GM12878 (cell line): ENCODE measurements at regions of chr15 and their contacts with region 1.

Region 1: DNA sequence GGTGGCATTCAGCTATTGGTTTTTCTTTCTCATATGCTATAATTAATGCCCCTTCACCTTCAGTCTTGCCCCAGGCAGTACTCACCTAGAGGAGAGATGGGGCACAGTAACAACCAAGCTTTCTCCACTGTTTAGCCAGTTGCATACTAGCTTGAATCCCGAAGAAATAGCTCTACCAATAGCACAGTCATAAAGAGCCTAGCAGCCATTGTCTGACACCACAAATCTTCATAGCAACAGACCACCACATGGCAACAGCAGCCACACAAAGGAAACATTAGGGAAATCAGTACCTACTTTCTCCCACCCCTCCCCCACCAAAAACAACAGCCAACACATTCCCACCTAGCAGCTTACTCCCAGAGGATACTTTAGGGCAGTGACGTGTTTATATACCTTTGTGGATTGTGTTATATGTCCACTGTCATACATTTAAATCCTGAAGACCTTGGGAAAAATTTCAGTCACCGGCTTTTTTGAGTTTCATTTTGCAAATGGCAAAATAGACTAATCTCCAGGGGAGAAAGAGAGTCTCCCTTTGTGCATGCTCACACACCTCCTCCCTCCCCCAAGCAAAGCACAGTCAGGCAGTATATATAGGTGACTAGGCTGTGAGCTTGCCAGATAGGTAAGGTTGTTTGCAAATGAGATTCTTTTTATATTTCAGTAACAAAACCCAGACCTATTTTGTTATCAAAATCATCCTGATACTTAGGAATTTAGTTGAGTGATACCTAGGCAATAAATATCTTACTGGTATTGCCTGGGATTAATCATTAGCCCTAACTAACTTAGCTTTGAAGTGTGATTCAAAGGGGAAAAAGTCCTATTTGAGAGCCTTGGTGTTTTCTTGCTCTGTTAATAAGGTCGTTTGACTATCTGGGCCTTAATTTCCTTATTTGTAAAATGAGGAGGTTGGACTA is 140.6 kb downstream of the RBPMS2 start:
- DNase-seq: peak; percentile 91
- ATAC-seq: peak; percentile 81
- H3K4me3 ChIP-seq: peak overlapping the region; percentile 41; the same call in 1 of the 2 replicates
- H3K27ac ChIP-seq: peak overlapping the region; percentile 97
- H3K4me1 ChIP-seq: peaks cover 45% of the 10 kb centered on the region
- H3K27me3 ChIP-seq: no peaks in the 10 kb centered on the region
- CTCF ChIP-seq: no peak
- EP300 ChIP-seq: peak; percentile 92 to 96
- POLR2A ChIP-seq: no peak
- RAD21 ChIP-seq: no peak

Region 2: DNA sequence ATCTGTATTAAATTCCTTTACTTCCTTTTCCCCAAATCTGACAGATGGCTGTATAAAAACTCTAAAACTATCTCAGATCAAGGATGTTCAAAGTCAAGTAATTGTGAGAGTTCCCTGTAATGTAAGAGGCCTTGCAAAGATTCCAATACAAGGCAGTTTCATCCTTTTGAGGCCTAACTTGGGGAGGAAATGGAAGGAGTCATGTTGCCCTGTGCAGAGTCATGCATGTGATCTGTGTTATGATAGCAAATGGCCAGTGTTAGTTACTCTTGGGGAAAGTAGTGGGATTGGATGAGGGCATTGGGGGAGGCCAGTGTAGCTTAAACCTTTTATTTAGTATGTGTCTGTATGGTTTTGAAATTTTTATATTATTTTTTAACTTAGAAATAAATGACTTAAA is 1061.3 kb before region 1 on chr15:
- CTCF ChIA-PET with region 1: no interaction called
- POLR2A ChIA-PET with region 1: no interaction called
- RAD21 ChIA-PET with region 1: no interaction called
- SMC1A ChIA-PET with region 1: no interaction called
- in situ Hi-C with region 1: no loop called
- intact Hi-C with region 1: no loop called
- DNase-seq: no peak
- ATAC-seq: no peak
- H3K4me3 ChIP-seq: no peak overlapping the region
- H3K27ac ChIP-seq: no peak overlapping the region
- H3K4me1 ChIP-seq: no peaks in the 10 kb centered on the region
- H3K27me3 ChIP-seq: no peaks in the 10 kb centered on the region
- CTCF ChIP-seq: no peak
- EP300 ChIP-seq: no peak
- POLR2A ChIP-seq: no peak
- RAD21 ChIP-seq: no peak

Region 3: DNA sequence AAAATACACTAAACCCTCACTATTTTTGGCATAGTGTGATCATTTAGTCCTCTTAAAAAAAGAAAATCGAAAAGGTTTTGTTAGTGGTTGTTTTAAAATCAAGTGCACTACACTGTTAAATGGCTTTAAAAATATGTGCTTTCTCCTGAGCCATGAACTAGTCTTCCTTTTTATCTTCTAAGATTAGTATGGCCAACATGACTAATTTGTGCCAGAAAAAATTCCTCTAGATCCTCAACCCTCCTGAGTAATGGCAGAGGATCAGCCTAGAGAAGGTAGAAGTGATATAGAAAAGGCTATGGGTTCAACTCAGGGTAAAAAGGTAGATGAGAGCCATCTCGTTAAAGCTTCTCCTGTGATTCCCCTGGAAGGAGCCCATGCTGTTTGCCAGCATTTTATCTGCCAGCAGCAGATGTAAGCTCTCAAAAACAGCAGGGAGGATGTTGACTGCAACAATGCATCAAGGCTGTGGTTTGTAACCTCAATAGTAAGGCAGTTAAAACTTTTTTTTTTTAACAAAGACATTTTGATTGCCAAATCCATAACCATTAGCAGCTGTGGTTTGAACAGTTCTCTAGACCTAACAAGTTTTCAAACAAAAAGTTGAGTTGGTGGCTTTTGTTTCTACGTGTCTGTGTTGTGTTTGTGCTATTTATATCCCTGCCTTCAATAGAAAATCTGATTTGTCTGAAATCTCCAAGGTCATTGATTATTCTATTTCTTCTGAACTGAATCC is 204.7 kb before region 1 on chr15:
- CTCF ChIA-PET with region 1: interaction called, 30 read pairs
- POLR2A ChIA-PET with region 1: interaction called, 4 read pairs
- RAD21 ChIA-PET with region 1: interaction called, 25 read pairs
- SMC1A ChIA-PET with region 1: interaction called, 34 read pairs
- in situ Hi-C with region 1: no loop called
- intact Hi-C with region 1: loop called (anchors 10 kb)
- DNase-seq: peak; percentile 65
- ATAC-seq: peak; percentile 87
- H3K4me3 ChIP-seq: 0 out of 2 replicates have a peak overlapping the region, but pooled peaks have one; percentile 6
- H3K27ac ChIP-seq: peak overlapping the region; percentile 87
- H3K4me1 ChIP-seq: peaks cover 19% of the 10 kb centered on the region
- H3K27me3 ChIP-seq: no peaks in the 10 kb centered on the region
- CTCF ChIP-seq: no peak
- EP300 ChIP-seq: peak in 1 of 2 experiments; percentile 55; a peak in 2 of 4 replicates
- POLR2A ChIP-seq: no peak
- RAD21 ChIP-seq: no peak

Region 4: GRCh38 chr15:64501396-64501715 is 133.5 kb before region 1 on chr15:
- CTCF ChIA-PET with region 1: no interaction called
- POLR2A ChIA-PET with region 1: interaction called, 3 read pairs
- RAD21 ChIA-PET with region 1: interaction called, 45 read pairs
- SMC1A ChIA-PET with region 1: interaction called, 32 read pairs
- in situ Hi-C with region 1: no loop called
- intact Hi-C with region 1: no loop called
- DNase-seq: no peak
- ATAC-seq: no peak
- H3K4me3 ChIP-seq: no peak overlapping the region
- H3K27ac ChIP-seq: no peak overlapping the region
- H3K4me1 ChIP-seq: peaks cover 14% of the 10 kb centered on the region
- H3K27me3 ChIP-seq: no peaks in the 10 kb centered on the region
- CTCF ChIP-seq: no peak
- EP300 ChIP-seq: no peak
- POLR2A ChIP-seq: no peak
- RAD21 ChIP-seq: no peak

Region 5: DNA sequence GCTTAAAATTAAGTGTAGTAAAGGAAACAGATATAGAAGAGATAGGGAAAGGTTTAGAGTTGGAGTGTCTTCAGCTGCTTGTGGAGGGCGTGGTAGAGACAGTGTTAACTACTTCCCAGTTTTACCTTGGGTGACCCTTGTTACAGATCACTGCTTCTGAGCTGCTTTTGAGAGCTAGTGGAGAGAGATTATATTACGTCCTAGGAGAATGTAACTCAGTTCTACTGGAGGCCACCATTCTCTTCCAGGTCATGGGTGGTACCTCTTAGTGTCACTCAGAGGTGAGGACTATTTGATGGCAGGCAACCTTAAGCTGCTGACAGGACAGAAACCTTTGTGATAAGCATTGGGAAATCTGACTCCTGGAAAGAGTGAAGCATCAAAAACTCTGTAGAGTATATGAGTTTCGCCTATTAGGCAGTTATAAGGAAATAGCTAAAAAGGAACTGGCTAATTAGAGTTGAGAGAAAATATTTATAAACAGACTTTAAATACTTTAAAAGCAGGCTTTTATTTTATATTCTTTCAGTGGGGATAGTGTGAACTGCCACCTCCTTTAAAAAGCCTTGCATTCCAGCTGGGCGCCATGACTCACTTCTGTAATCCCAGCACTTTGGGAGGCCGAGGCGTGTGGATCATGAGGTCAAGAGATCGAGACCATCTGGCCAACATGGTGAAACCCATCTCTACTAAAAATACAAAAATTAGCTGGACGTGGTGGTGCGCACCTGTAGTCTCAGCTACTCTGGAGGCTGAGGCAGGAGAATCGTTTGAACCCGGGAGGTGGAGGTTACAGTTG is 68.0 kb before region 1 on chr15:
- CTCF ChIA-PET with region 1: interaction called, 5 read pairs
- POLR2A ChIA-PET with region 1: interaction called, 3 read pairs
- RAD21 ChIA-PET with region 1: interaction called, 61 read pairs
- SMC1A ChIA-PET with region 1: interaction called, 53 read pairs
- in situ Hi-C with region 1: no loop called
- intact Hi-C with region 1: no loop called
- DNase-seq: no peak
- ATAC-seq: peak; percentile 57
- H3K4me3 ChIP-seq: no peak overlapping the region
- H3K27ac ChIP-seq: no peak overlapping the region
- H3K4me1 ChIP-seq: peaks cover 33% of the 10 kb centered on the region
- H3K27me3 ChIP-seq: no peaks in the 10 kb centered on the region
- CTCF ChIP-seq: no peak
- EP300 ChIP-seq: no peak
- POLR2A ChIP-seq: no peak
- RAD21 ChIP-seq: no peak

Region 6: GRCh38 chr15:64622410-64623260 is 12.2 kb before region 1 on chr15:
- CTCF ChIA-PET with region 1: interaction called, 16 read pairs
- POLR2A ChIA-PET with region 1: interaction called, 40 read pairs
- RAD21 ChIA-PET with region 1: interaction called, 149 read pairs
- SMC1A ChIA-PET with region 1: interaction called, 152 read pairs
- in situ Hi-C with region 1: no loop called
- intact Hi-C with region 1: loop called (anchors 1 kb)
- DNase-seq: peak; percentile 96
- ATAC-seq: peak; percentile 93
- H3K4me3 ChIP-seq: no peak overlapping the region
- H3K27ac ChIP-seq: peak overlapping the region; percentile 90
- H3K4me1 ChIP-seq: peaks cover 55% of the 10 kb centered on the region
- H3K27me3 ChIP-seq: no peaks in the 10 kb centered on the region
- CTCF ChIP-seq: no peak
- EP300 ChIP-seq: peak; percentile 69 to 74
- POLR2A ChIP-seq: no peak
- RAD21 ChIP-seq: no peak

Region 7: GRCh38 chr15:64673866-64674265 is 39.0 kb after region 1 on chr15:
- CTCF ChIA-PET with region 1: no interaction called
- POLR2A ChIA-PET with region 1: interaction called, 6 read pairs
- RAD21 ChIA-PET with region 1: interaction called, 17 read pairs
- SMC1A ChIA-PET with region 1: interaction called, 12 read pairs
- in situ Hi-C with region 1: no loop called
- intact Hi-C with region 1: no loop called
- DNase-seq: no peak
- ATAC-seq: no peak
- H3K4me3 ChIP-seq: no peak overlapping the region
- H3K27ac ChIP-seq: no peak overlapping the region
- H3K4me1 ChIP-seq: no peaks in the 10 kb centered on the region
- H3K27me3 ChIP-seq: no peaks in the 10 kb centered on the region
- CTCF ChIP-seq: no peak
- EP300 ChIP-seq: no peak
- POLR2A ChIP-seq: no peak
- RAD21 ChIP-seq: no peak